ENCODE measurements at regions of chr12 and their contacts with region 1.

Region 1: GRCh38 chr12:98719515-98720504 is 74.7 kb downstream of the APAF1 start:
- DNase-seq: no peak
- ATAC-seq: no peak
- H3K4me3 ChIP-seq: no peak overlapping the region
- H3K27ac ChIP-seq: no peak overlapping the region
- H3K4me1 ChIP-seq: no peaks in the 10 kb centered on the region
- H3K27me3 ChIP-seq: no peaks in the 10 kb centered on the region
- CTCF ChIP-seq: no peak
- POLR2A ChIP-seq: no peak

Region 2: GRCh38 chr12:98983647-98984046 is 263.8 kb after region 1 on chr12:
- intact Hi-C with region 1: no loop called
- DNase-seq: no peak
- ATAC-seq: no peak
- H3K4me3 ChIP-seq: no peak overlapping the region
- H3K27ac ChIP-seq: no peak overlapping the region
- H3K4me1 ChIP-seq: no peaks in the 10 kb centered on the region
- H3K27me3 ChIP-seq: no peaks in the 10 kb centered on the region
- CTCF ChIP-seq: no peak
- POLR2A ChIP-seq: no peak

Region 3: GRCh38 chr12:99004799-99005466 is 285.1 kb after region 1 on chr12:
- intact Hi-C with region 1: loop called (anchors 5 kb)
- DNase-seq: no peak
- ATAC-seq: no peak
- H3K4me3 ChIP-seq: no peak overlapping the region
- H3K27ac ChIP-seq: no peak overlapping the region
- H3K4me1 ChIP-seq: no peaks in the 10 kb centered on the region
- H3K27me3 ChIP-seq: no peaks in the 10 kb centered on the region
- CTCF ChIP-seq: no peak
- POLR2A ChIP-seq: no peak